Activated CD4-positive, alpha-beta T cell treated with anti-CD3 and anti-CD28 coated beads, Interleukin-2, amount 10 ng/mL, durations not matched to agents 7 days and 5 days (primary cell): ENCODE measurements at regions of chr14 and their contacts with region 1.

Region 1: DNA sequence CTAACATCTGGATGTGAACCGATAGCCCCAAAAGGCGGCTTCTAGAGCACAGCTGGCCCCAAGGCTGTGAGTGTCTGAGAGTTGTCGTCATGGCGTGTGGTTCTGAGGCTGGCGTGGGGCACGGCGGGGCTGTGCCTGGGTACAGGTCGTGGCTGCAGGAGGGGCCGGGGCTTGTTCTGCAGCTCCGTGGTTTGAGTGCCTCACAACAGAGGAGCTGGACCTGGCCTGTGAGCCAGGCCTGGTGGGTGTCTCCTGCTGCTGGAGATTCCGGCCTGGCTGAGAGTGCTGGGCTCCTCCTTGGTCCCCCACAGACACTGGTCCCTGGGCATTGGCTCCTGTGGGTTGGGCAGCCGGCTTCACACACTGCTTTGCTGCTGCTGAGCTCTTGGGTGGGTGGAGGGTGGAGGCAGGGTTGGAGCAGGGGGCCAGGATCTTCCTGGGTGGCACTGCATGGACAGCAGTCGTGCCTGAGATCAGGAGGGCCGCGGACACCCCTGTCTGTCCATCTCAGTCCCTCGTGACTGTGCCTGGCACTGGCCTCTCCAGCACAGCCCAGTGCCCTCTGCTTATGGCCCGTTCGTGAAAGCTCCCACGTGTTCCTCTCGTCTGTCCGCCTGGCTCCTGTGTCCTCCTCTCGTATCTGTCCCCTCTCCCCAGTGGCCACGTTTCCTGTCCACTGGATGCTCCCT is 31.8 kb upstream of the TEX22 start:
- DNase-seq: no peak
- H3K4me3 Mint-ChIP-seq: no peak overlapping the region
- H3K27ac Mint-ChIP-seq: no peak overlapping the region
- H3K4me1 Mint-ChIP-seq: peaks cover 10% of the 10 kb centered on the region
- H3K27me3 Mint-ChIP-seq: peaks cover 10% of the 10 kb centered on the region

Region 2: DNA sequence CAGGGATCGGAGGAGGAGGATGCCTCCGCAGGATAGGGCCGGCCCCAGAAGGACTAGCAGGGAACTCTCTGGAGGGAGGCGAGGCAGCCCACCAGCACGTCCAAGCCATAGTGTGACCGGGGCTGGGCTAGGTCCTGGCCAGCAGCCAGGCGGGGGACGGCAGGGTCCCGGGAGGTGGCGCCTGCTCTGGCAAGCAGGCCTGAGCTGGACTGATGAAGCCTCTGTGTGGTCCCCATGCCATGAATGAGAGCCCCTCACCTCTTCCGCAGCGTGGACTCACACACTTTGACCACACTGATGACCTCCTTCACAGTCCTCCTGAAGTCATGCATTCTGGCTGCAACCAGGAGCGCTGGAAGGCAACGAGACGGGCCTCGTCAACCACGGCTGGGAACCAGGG is 138.0 kb before region 1 on chr14:
- CTCF ChIA-PET with region 1: no interaction called
- POLR2A ChIA-PET with region 1: no interaction called
- DNase-seq: no peak
- H3K4me3 Mint-ChIP-seq: no peak overlapping the region
- H3K27ac Mint-ChIP-seq: no peak overlapping the region
- H3K4me1 Mint-ChIP-seq: no peaks in the 10 kb centered on the region
- H3K27me3 Mint-ChIP-seq: no peaks in the 10 kb centered on the region

Region 3: DNA sequence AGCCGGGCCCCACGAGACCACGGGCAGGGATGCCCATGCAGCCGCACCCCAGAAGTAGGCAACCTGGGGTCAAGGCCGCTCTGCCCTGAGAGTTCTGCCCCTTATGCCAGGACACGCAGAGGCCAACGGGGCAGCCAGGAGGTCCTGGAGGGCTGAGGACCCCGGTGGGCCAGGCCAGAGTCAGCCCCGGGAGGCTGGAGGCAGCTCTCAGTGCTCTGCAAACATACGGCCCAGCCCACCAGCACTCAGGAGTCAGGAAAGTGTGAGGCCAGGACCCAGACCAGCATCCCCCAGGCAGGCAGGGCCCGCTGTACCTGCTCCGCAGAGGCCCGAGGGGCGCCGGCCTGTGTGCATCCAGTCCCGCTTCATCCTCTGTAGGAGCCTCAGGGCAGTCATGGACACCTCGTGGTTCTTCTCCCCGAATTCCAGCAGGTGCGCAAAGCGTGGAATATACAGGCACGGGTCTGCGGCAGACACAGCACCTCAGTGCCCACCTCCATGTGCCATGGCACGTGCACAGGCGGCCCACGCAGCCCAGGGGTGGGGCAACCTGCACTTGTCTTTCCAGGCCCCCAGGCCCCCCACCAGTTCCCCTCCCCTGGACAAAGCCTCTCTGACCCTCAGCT is 125.5 kb before region 1 on chr14:
- CTCF ChIA-PET with region 1: no interaction called
- POLR2A ChIA-PET with region 1: no interaction called
- DNase-seq: no peak
- H3K4me3 Mint-ChIP-seq: no peak overlapping the region
- H3K27ac Mint-ChIP-seq: no peak overlapping the region
- H3K4me1 Mint-ChIP-seq: peaks cover 6% of the 10 kb centered on the region
- H3K27me3 Mint-ChIP-seq: no peaks in the 10 kb centered on the region

Region 4: DNA sequence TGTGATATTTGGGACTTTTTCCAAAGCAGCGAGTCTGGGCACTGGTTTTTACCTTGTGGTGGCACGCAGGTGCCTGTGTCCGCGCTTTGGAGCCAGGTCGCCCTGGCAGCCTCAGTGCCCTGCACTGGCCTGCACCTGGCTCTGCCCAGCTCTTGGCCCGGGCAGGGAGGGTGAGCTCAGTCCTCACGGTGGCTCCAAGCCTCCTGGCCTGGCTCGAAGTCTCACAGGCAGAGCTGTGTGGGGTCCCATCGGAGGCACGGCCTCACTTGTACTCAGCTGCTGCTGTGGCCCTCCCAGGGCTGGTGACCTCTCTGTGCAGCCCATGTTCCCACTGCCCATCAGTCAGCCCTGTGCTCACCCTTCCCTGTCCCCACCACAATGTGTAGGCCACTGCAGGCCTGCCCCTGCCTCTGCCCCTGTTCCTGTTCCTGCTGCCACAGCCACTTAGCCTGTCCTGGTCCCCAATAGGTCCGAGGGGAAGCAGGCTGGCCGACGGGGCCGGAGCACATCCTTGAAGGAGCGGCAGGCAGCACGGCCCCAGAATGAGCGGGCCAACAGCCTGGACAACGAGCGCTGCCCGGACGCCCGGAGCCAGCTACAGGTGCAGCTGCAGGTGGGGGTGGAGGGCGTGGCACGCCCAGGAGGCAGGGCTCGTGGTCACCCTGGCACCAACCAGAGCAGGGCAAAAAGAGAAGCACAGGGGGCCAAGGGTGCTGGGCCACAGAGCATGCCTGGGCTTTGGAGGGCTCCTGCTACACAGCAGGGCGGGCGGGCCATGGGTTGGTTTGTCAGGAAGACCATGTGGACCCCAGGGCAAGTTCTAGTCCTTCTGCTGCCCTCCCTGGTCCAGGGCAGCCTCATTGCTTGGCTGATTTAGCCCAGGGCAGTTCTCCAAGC is 15.2 kb after region 1 on chr14:
- CTCF ChIA-PET with region 1: interaction called, 10 read pairs
- POLR2A ChIA-PET with region 1: no interaction called
- DNase-seq: no peak
- H3K4me3 Mint-ChIP-seq: no peak overlapping the region
- H3K27ac Mint-ChIP-seq: no peak overlapping the region
- H3K4me1 Mint-ChIP-seq: no peaks in the 10 kb centered on the region
- H3K27me3 Mint-ChIP-seq: no peaks in the 10 kb centered on the region

Region 5: DNA sequence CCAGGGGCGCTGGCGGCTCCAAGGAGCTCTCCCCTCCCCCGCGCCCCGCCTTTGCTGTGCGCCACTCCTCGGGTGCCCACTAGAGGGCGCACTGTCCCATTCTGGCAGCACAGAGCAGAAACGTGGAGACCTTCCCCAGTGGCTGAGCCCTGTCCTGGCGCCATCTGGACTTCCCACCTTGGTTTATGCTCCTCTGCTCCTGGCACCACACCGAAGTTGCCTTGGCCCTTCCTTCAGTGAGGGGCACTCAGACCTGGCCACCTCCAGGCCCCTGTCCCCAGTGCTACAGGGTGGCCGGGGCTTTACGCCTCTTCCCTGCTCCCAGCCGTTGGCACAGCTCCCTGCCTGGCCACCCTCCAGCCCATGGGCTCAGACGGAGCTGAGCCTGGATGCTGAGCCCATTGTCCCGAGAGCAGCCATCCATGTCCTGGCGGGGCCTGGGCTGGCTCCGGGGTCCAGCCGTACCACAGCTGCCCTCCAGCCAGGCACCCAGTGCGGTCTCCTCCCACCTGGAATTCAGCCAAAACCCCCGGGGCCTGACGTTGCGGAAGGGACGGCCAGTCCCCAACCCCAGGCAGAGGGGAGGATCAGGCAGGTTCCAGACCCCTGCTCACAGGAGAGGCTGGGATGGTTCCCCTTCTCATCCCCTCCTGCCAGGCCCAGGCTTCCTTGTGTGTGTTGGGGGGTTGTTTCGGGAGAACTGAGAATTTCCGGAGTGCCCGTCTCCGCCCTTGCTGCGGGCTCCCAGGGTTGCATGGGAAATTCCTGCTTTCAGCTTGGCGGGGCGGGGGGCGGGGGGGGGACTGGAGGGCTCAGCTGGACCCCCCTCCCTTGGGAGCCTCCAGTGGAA is 114.6 kb after region 1 on chr14:
- CTCF ChIA-PET with region 1: interaction called, 10 read pairs
- POLR2A ChIA-PET with region 1: no interaction called
- DNase-seq: peak; percentile 87
- H3K4me3 Mint-ChIP-seq: peak overlapping the region; percentile 57
- H3K27ac Mint-ChIP-seq: peak overlapping the region; percentile 98
- H3K4me1 Mint-ChIP-seq: peaks cover 47% of the 10 kb centered on the region
- H3K27me3 Mint-ChIP-seq: peaks cover 22% of the 10 kb centered on the region

Region 6: DNA sequence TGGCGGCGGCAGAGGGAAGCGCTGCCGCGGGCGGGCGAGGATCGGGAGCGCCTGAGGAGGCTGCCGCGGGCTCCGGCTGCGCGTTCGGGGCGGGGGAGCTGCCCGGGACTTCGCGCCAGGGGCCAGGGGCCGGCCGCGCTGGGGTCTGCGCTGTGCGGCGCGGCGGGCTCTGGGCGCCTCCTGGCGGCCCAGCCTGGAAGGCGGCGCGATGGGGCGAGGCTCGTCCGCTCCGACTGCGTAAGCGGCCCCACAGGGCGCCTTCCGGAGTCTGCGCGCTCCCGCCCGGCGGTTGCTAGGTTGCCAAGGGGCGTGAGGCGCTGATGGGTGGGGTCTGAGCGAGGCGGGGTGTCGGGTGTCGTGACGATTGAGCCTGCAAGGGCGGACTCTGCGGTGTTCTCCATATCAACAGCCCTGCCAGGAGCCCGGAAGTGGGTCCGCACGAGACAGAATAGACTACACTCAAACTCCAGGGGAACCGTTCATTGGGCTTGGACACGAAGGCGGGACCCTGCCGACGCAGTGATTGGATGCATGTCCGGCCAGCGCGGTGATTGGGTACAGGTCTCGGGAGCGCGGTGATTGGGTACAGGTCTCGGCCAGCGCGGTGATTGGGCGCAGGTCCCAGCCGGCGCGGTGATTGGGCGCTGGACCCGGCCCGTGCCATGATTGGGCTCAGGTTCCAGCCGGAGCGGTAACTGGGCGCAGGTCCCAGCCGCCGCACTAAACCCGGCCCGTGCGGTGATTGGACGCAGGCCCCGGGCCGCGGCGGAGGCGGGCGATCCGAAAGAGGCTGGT is 124.2 kb after region 1 on chr14 and contains the start of gene TEDC1:
- CTCF ChIA-PET with region 1: interaction called, 30 read pairs
- POLR2A ChIA-PET with region 1: interaction called, 6 read pairs
- DNase-seq: peak; percentile 100
- H3K4me3 Mint-ChIP-seq: peak within 1 kb of the TSS; percentile 84
- H3K27ac Mint-ChIP-seq: peak within 1 kb of the TSS; percentile 96
- H3K4me1 Mint-ChIP-seq: peaks cover 28% of the 10 kb centered on the region
- H3K27me3 Mint-ChIP-seq: peaks cover 2% of the 10 kb centered on the region
- total RNA-seq, gene TEDC1: 40.7 to 53.2 TPM